Vagina (tissue), 2 donors: ENCODE measurements at regions of chr3 and their contacts with region 1.

Region 1: DNA sequence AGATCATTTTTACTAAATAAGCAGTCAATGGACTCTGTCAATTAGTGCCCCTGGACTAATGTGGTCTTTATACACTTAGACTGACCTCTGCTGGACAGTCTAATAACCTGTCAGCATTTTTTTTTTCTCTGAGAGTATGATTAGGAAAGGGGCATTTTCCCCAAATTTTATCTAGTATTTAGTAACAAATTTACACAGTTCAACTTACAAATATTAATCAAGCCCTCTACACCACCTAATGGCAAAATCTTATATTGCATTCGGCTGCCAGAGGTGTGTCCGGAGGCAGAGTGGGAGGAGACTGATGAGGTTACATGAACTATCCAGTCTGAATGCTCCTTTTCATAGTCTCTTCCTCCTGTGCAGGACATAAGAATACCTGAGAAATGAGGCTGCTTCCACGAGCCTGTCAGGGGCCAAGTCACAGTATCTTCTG is 36.0 kb upstream of the COLQ start:
- DNase-seq: no peak
- H3K4me3 ChIP-seq: no peak overlapping the region
- H3K27ac ChIP-seq: no peak overlapping the region
- H3K4me1 ChIP-seq: no peaks in the 10 kb centered on the region
- H3K27me3 ChIP-seq: no peaks in the 10 kb centered on the region
- CTCF ChIP-seq: peak; percentile 40 to 58 (median 46)
- POLR2A ChIP-seq: no peak

Region 2: GRCh38 chr3:15180042-15180611 is 377.4 kb before region 1 on chr3:
- intact Hi-C with region 1: no loop called
- DNase-seq: no peak
- H3K4me3 ChIP-seq: no peak overlapping the region
- H3K27ac ChIP-seq: peak overlapping the region; percentile 1
- H3K4me1 ChIP-seq: no peaks in the 10 kb centered on the region
- H3K27me3 ChIP-seq: no peaks in the 10 kb centered on the region
- CTCF ChIP-seq: no peak
- POLR2A ChIP-seq: no peak

Region 3: DNA sequence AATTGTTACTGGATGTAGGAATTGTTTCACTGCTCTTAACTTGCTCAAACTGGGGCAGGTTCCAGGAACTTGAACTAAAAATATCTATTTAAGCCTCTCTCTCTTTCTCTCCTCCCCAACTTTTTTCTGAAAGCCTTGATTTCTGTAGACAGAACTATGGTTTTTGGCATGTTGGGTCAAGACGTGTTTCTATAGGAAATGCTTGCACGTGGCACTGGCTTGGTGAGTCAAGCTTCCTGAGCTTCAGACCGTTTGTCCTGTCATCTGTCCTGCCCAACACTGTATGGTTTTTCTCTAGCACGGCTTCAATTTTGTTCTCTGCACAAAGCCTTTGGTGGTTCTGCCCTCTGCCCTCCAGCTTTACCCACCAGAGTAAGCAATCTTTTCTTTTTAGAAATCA is 116.6 kb before region 1 on chr3:
- intact Hi-C with region 1: loop called (anchors 10 kb)
- DNase-seq: no peak
- H3K4me3 ChIP-seq: no peak overlapping the region
- H3K27ac ChIP-seq: no peak overlapping the region
- H3K4me1 ChIP-seq: no peaks in the 10 kb centered on the region
- H3K27me3 ChIP-seq: no peaks in the 10 kb centered on the region
- CTCF ChIP-seq: no peak
- POLR2A ChIP-seq: no peak